BJ (cell line): ENCODE measurements at regions of chr7 and their contacts with region 1.

Region 1: GRCh38 chr7:98168181-98168905 is 42.9 kb upstream of the BHLHA15 start:
- DNase-seq: no peak
- H3K4me3 ChIP-seq: no peak overlapping the region
- H3K27me3 ChIP-seq: no peaks in the 10 kb centered on the region
- CTCF ChIP-seq: peak; percentile 82

Region 2: GRCh38 chr7:98097042-98097645 is 71.2 kb before region 1 on chr7:
- CTCF ChIA-PET with region 1: interaction called, 16 read pairs
- POLR2A ChIA-PET with region 1: no interaction called
- DNase-seq: no peak
- H3K4me3 ChIP-seq: no peak overlapping the region
- H3K27me3 ChIP-seq: no peaks in the 10 kb centered on the region
- CTCF ChIP-seq: no peak

Region 3: DNA sequence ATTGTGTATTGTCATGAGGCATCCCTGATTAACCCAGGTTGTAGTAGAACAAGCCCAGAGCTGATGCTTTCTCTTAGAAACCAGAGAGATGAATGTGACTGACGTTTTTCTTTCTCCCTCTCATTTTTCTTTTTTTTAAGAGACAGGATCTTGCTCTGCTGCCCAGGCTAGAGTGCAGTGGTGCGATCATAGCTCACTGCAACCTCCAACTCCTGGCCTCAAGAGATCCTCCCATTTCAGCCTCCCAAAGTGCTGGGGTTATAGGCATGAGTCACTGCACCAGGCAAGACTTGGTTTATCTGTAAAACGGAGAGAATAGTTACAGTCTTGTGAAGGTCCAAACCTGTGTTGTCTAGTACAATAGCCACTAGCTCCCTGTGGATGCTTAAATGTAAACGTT is 56.3 kb before region 1 on chr7:
- CTCF ChIA-PET with region 1: interaction called, 15 read pairs
- POLR2A ChIA-PET with region 1: no interaction called
- DNase-seq: no peak
- H3K4me3 ChIP-seq: no peak overlapping the region
- H3K27me3 ChIP-seq: no peaks in the 10 kb centered on the region
- CTCF ChIP-seq: no peak

Region 4: GRCh38 chr7:98133181-98133580 is 35.2 kb before region 1 on chr7:
- CTCF ChIA-PET with region 1: interaction called, 19 read pairs
- POLR2A ChIA-PET with region 1: no interaction called
- DNase-seq: no peak
- H3K4me3 ChIP-seq: no peak overlapping the region
- H3K27me3 ChIP-seq: no peaks in the 10 kb centered on the region
- CTCF ChIP-seq: no peak